ENCODE measurements at regions of chr11 and their contacts with region 1.

Region 1: GRCh38 chr11:69088676-69089146 is 40.0 kb downstream of the TPCN2 start:
- DNase-seq: peak; percentile 89
- H3K4me3 ChIP-seq: no peak overlapping the region
- H3K27ac ChIP-seq: peak overlapping the region; percentile 82 to 90 (median 86)
- H3K4me1 ChIP-seq: peaks cover 0 to 42% (median 36%) of the 10 kb centered on the region in 4 donors
- H3K27me3 ChIP-seq: no peaks in the 10 kb centered on the region
- CTCF ChIP-seq: peak; percentile 67 to 76 (median 72)
- EP300 ChIP-seq: no peak
- POLR2A ChIP-seq: no peak

Region 2: DNA sequence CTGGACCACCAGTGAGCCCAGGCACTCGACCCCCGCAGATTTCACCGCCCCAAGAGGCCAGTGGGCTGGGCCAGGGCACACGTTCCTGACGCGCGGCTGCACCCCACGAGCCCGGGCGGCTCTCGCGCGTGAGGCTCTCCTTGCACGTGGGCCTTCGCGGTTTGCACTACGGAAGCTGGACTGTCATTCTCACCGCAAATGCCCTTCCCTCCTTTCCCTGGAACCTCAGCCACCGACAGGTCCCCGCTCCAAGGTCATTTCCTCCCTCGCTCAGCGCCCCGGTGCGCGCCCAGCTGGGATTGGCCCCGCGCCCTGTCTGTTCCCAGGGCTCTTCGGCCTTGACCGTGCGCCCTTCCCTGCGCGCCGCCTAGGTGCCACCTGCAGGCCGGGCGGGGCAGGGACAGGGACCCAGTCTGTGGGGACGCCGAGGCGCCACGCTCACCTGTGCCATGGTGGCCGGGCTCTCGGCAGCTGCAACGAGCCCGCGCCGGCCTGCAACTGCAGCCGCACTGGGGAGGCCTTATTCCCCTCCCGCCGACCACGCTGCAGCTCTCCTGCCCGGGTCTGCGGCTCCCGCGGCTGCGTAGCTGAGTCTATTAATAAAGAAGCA is 244.9 kb before region 1 on chr11:
- intact Hi-C with region 1: loop called (anchors 5 kb)
- DNase-seq: peak; percentile 84
- H3K4me3 ChIP-seq: peak overlapping the region; percentile 13 to 92 (median 81)
- H3K27ac ChIP-seq: peak overlapping the region; percentile 32 to 98 (median 95)
- H3K4me1 ChIP-seq: peaks cover 0 to 41% (median 37%) of the 10 kb centered on the region in 4 donors
- H3K27me3 ChIP-seq: no peaks in the 10 kb centered on the region
- CTCF ChIP-seq: peak; percentile 43 to 57 (median 46)
- EP300 ChIP-seq: no peak
- POLR2A ChIP-seq: no peak

Region 3: GRCh38 chr11:68903288-68904247 is 185.1 kb before region 1 on chr11 and contains the starts of genes IGHMBP2 and MRPL21:
- intact Hi-C with region 1: loop called (anchors 5 kb)
- DNase-seq: peak; percentile 92
- H3K4me3 ChIP-seq: peak within 1 kb of the TSS; percentile 63 to 94 (median 80)
- H3K27ac ChIP-seq: peak within 1 kb of the TSS; percentile 85 to 94 (median 91)
- H3K4me1 ChIP-seq: peaks cover 2 to 38% (median 31%) of the 10 kb centered on the region in 4 donors
- H3K27me3 ChIP-seq: no peaks in the 10 kb centered on the region
- CTCF ChIP-seq: no peak
- EP300 ChIP-seq: no peak
- POLR2A ChIP-seq: peak; percentile 57 to 71
- total RNA-seq, gene IGHMBP2: 12.2 to 41.3 (median 30.4) TPM
- total RNA-seq, gene MRPL21: 53.7 to 99.1 (median 67.5) TPM

Region 4: GRCh38 chr11:68927280-68928135 is 161.2 kb before region 1 on chr11:
- intact Hi-C with region 1: loop called (anchors 5 kb)
- DNase-seq: no peak
- H3K4me3 ChIP-seq: no peak overlapping the region
- H3K27ac ChIP-seq: peak overlapping the region; percentile 81 to 94 (median 85)
- H3K4me1 ChIP-seq: peaks cover 0 to 59% (median 46%) of the 10 kb centered on the region in 4 donors
- H3K27me3 ChIP-seq: no peaks in the 10 kb centered on the region
- CTCF ChIP-seq: no peak
- EP300 ChIP-seq: no peak
- POLR2A ChIP-seq: no peak

Region 5: DNA sequence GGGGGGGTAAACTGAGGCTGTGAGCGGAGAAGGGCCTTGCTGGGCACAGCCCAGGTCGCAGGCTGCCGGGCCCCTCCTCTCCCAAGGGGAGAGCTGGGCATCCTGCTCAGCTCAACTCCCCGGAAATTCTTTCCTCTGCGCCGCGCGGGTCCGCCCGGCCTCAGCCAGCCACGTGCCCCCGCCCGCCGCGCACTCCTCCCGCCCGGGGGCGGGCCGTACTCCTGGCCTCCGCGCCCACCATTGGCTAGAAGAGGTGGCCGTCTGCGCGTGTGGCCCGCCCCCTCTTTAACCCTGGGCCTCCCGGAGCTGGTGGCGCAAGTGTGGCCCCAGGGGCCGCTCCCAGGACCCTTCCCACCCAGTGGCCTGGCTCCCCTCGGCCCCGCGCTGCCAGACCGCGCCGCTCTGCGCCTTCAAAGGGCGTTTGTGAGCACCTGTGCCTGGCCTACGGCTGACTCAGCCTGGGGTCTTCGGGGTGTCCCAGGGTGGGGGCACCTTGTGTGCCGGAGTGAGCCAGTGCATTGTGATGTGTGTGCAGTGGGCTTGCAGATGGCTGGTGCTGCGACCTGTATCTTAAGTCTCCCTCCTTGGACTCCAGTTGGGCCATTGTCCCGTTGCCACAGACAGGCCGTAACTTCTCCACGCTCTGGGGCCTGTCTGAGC is 77.6 kb before region 1 on chr11:
- intact Hi-C with region 1: loop called (anchors 1 kb)
- DNase-seq: peak; percentile 97
- H3K4me3 ChIP-seq: peak overlapping the region; percentile 75 to 84 (median 78)
- H3K27ac ChIP-seq: peak overlapping the region; percentile 91 to 100 (median 98)
- H3K4me1 ChIP-seq: peaks cover 0 to 73% (median 69%) of the 10 kb centered on the region in 4 donors
- H3K27me3 ChIP-seq: no peaks in the 10 kb centered on the region
- CTCF ChIP-seq: no peak
- EP300 ChIP-seq: no peak
- POLR2A ChIP-seq: peak; percentile 68 to 92

Region 6: DNA sequence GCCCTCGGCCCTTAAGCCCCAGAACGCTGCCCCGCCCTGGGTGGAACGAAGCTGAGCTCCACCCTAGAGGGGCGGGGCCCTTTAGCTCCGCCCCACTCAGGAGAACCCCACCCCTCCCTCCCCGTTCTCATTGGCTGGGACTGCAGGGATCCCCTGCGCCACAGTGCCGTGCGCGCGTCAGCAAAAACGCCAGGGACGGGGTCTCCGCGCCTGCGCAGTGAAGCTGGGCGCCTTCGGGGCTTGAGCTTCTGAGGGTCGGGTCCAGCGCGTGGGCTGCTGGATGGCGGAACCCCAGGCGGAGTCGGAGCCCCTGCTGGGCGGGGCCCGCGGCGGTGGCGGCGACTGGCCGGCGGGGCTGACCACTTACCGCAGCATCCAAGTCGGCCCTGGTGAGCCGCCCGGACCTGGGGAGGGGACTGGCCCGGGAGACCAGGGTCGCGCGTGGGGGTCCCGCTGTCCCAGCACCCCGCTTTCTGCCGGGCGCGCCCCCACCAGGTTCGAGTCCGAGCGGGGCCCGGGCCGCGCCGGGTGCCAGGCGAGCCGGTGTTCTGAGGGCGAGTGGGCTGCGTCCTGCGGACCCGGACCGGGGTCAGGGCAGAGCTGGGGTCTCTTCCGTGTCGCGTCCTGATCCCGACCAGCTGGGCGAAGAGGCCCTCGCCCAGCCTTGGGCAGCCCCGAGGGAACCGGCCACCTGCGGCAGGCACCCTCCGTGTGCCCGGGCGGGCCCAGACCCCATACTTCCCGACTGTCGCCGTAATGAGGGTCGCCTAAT is 39.8 kb before region 1 on chr11 and contains the start of gene TPCN2:
- intact Hi-C with region 1: loop called (anchors 5 kb)
- DNase-seq: peak; percentile 98
- H3K4me3 ChIP-seq: peak within 1 kb of the TSS; percentile 70 to 99 (median 92)
- H3K27ac ChIP-seq: peak within 1 kb of the TSS; percentile 94 to 99 (median 98)
- H3K4me1 ChIP-seq: peaks cover 0 to 64% (median 59%) of the 10 kb centered on the region in 4 donors
- H3K27me3 ChIP-seq: no peaks in the 10 kb centered on the region
- CTCF ChIP-seq: no peak
- EP300 ChIP-seq: peak in 1 of 4 donors; percentile 73
- POLR2A ChIP-seq: peak; percentile 59 to 87
- total RNA-seq, gene TPCN2: 17.5 to 43.5 (median 25.3) TPM

Region 7: DNA sequence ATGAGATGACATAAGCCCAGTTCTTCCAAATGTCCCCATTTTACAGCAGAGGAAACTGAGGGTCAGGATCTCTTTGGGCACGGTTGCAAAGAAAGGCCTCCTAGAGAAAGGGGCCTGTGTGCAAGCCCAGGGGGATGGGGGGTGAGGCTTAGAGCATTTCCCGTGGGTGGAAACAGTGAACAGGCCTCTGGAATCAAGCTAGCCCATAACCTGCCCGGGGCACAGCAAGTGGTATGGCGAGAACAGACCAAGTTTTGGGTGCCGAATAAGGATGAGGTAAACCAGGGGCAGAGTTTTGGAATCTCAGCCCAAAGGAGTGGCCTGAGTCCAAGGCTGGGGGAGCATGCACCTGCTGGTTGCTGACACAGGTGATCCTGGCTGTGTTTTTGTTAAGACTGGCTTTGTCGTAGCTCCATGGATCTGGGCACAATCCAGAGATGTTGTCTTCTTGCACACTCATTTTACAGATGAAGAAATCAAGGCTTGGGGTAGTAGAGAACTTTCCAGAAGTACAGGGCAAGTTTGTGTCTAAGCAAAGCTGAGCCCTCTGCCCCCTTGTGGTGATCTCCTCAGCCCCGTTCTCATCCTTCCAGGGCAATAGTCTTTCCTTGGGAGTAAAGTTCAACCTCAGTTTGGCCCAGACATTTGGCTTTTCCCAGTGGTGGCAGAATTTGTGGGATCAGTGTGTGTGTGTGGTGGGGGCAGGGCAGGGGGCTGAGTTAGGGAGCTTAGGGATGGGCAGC is 151.8 kb after region 1 on chr11:
- intact Hi-C with region 1: no loop called
- DNase-seq: no peak
- H3K4me3 ChIP-seq: no peak overlapping the region
- H3K27ac ChIP-seq: no peak overlapping the region
- H3K4me1 ChIP-seq: no peaks in the 10 kb centered on the region
- H3K27me3 ChIP-seq: no peaks in the 10 kb centered on the region
- CTCF ChIP-seq: peak in 1 of 4 experiments; percentile 9
- EP300 ChIP-seq: no peak
- POLR2A ChIP-seq: no peak

Region 8: DNA sequence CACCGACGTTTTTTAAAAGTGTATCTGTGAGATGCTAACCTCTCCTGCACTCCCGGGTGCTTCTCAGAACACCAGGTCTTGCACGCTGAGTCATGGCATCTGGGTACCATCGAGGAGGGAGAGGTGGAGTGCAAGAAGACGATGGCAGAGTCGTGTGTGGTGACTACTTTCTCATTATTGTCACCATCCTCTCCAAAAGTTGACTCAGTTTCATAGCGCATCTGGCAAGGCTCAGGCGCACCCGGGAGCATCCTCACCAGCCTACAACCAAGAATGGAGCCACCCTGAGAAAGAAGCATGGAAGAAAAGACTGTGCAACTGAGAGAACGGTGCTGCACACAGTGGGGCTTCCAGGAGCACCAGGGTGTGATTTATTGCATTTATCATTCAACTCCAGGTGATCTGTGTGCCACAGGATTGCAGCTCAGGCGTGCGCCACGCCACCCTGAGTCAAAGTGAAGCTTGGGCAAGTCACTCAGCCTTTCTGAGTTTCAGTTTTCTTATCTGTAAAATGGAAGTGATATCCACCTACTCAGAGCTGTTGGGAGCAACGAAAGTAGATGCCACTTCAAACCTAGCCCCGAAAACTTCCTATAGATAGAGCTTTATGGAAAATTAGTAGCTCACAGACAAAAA is 458.1 kb after region 1 on chr11:
- intact Hi-C with region 1: no loop called
- DNase-seq: peak; percentile 8
- H3K4me3 ChIP-seq: no peak overlapping the region
- H3K27ac ChIP-seq: no peak overlapping the region
- H3K4me1 ChIP-seq: no peaks in the 10 kb centered on the region
- H3K27me3 ChIP-seq: no peaks in the 10 kb centered on the region
- CTCF ChIP-seq: no peak
- EP300 ChIP-seq: no peak
- POLR2A ChIP-seq: no peak